H1 (cell line): ENCODE measurements at regions of chr2 and their contacts with region 1.

Region 1: GRCh38 chr2:57759822-57760300 is 286.7 kb upstream of the VRK2 start:
- DNase-seq: peak; percentile 67 to 99
- H3K4me3 ChIP-seq: peak overlapping the region in 2 of 4 experiments; percentile 11 to 36; a peak in 3 of 8 replicates
- H3K27ac ChIP-seq: no peak overlapping the region
- H3K4me1 ChIP-seq: peaks cover 3 to 8% (median 5%) of the 10 kb centered on the region in 4 experiments; a peak in 4 of 7 replicates
- H3K27me3 ChIP-seq: no peaks in the 10 kb centered on the region
- CTCF ChIP-seq: peak; percentile 85 to 96 (median 95)
- EP300 ChIP-seq: no peak; a peak in 1 of 3 replicates
- POLR2A ChIP-seq: no peak
- RAD21 ChIP-seq: peak; percentile 96 to 99

Region 2: DNA sequence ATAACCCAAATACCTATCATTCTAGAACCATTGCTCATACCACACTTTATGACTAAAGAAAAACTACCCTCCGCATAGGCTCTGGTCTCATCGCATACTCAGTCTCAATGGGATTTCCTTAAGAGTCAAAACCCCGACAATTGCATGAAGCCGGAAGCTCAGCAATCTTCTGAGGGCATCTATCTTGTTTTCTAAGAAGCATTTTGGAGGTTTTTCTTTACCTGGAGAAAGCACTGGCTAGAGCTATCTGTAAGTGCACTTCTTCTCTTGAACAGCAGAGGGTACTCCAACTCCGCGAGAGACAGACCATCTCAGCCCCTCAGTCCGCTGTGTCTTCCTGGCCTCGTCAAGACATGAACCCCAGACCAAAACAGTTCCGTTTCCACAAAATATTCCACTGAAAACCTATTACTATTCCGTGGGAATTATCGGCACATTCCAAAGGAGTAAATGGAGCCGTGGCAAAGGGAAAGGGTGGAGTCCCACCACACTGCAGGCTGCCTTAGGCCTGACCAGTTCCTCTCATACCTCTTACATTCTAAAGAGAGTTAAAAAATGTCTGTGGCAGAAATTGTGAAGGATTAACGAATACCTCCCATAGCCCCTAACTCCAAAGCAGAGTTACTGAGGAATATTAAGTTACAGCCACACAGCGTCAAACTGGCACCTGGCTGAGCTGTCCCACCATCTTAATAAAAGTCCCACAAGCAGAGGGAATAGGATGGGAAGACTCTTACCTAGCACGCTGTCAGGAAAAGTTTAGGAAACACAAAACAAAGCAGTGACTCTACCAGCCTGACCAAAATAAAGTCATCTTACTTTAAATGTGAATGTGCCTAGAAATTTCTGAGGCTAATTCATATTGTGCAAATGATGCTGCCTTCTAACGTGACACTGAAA is 38.9 kb before region 1 on chr2:
- CTCF ChIA-PET with region 1: interaction called, 10 read pairs
- POLR2A ChIA-PET with region 1: no interaction called
- DNase-seq: peak in 1 of 2 experiments; percentile 66
- H3K4me3 ChIP-seq: peak overlapping the region in 1 of 4 experiments; percentile 37; a peak in 1 of 8 replicates
- H3K27ac ChIP-seq: no peak overlapping the region
- H3K4me1 ChIP-seq: peaks cover 0 to 3% (median 0%) of the 10 kb centered on the region in 4 experiments; a peak in 2 of 7 replicates
- H3K27me3 ChIP-seq: no peaks in the 10 kb centered on the region
- CTCF ChIP-seq: peak; percentile 60 to 85 (median 79)
- EP300 ChIP-seq: no peak
- POLR2A ChIP-seq: no peak
- RAD21 ChIP-seq: peak; percentile 96 to 98

Region 3: GRCh38 chr2:57906152-57906732 is 146.4 kb after region 1 on chr2:
- CTCF ChIA-PET with region 1: interaction called, 10 read pairs
- POLR2A ChIA-PET with region 1: no interaction called
- DNase-seq: no peak
- H3K4me3 ChIP-seq: no peak overlapping the region
- H3K27ac ChIP-seq: no peak overlapping the region
- H3K4me1 ChIP-seq: peaks cover 0 to 7% (median 3%) of the 10 kb centered on the region in 4 experiments; a peak in 1 of 7 replicates
- H3K27me3 ChIP-seq: no peaks in the 10 kb centered on the region
- CTCF ChIP-seq: peak in 2 of 3 experiments; percentile 62 to 79; a peak in 3 of 4 replicates
- EP300 ChIP-seq: no peak
- POLR2A ChIP-seq: no peak
- RAD21 ChIP-seq: peak; percentile 95 to 98